Activated CD4-positive, alpha-beta T cell treated with anti-CD3 and anti-CD28 coated beads, Interleukin-2, amount 10 ng/mL, durations not matched to agents 24 days and 14 days (primary cell): ENCODE measurements at regions of chrX and their contacts with region 1.

Region 1: DNA sequence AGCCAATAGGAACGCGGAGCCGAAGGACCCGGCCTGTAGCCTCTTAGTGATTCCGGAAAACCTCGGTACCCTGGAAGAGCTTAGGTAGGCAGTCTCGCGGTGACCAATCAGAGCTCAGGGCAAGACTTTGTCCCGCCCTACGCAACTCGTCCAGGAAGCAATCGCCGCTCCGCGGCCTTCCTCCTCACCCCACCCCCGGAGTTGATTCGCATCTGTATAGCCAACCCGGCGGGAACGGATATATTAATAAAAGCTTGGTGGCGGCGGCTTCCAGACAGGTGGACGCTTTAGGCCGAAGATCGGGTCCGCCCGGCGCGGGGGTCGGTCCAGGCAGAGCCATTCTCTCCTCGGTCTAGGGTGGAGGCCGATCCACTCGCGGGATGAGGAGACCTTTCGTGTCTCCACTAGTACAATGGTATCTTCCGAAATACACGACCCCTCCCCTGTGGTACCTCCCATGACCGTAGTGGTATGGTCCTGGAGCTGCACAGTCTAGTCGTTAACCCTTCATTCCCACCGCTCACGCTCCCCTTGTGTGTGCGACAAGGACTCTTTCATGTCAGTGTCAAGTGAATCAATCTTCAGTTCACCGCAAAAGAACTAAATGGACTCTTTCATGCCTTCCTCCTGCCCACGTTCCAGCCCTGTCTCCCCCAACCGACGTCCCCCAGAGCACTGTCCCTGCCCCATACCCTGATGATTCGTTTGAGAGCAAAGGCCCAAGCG is 24.2 kb upstream of the GLOD5 start:
- DNase-seq: peak; percentile 96
- H3K4me3 Mint-ChIP-seq: peak overlapping the region; percentile 91
- H3K27ac Mint-ChIP-seq: peak overlapping the region; percentile 89
- H3K4me1 Mint-ChIP-seq: peaks cover 12% of the 10 kb centered on the region
- H3K27me3 Mint-ChIP-seq: no peaks in the 10 kb centered on the region

Region 2: DNA sequence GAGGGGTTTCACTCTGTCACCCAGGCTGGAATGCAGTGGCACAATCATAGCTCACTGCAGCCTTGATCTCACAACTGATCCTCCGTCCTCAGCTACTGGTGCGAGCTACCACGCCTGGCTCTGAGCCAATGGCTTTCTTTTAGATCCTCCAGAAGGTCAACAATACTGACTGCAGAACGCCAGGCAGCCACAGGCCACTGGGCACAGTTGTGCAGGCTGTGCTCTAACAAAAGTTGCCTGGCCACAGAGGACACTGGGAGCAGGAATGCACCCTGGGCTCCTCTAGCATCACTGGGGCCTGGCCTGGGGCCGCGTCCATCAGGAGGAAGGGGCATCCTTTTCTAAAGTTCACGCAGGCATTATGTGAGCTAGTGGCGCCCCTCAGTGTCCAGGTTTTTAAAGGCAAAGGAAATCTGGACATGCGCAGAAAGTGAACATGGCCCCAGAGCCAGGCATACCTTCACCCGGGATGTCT is 243.4 kb before region 1 on chrX:
- intact Hi-C with region 1: no loop called
- DNase-seq: no peak
- H3K4me3 Mint-ChIP-seq: no peak overlapping the region
- H3K27ac Mint-ChIP-seq: no peak overlapping the region
- H3K4me1 Mint-ChIP-seq: peaks cover 3% of the 10 kb centered on the region
- H3K27me3 Mint-ChIP-seq: no peaks in the 10 kb centered on the region

Region 3: GRCh38 chrX:48683411-48683982 is 53.9 kb before region 1 on chrX and contains the start of gene WAS:
- intact Hi-C with region 1: loop called (anchors 2 kb)
- DNase-seq: peak; percentile 85
- H3K4me3 Mint-ChIP-seq: peak within 1 kb of the TSS; percentile 98
- H3K27ac Mint-ChIP-seq: peak within 1 kb of the TSS; percentile 98
- H3K4me1 Mint-ChIP-seq: peaks cover 43% of the 10 kb centered on the region
- H3K27me3 Mint-ChIP-seq: no peaks in the 10 kb centered on the region
- total RNA-seq, gene WAS: 99.0 and 104 TPM in 2 replicates

Region 4: GRCh38 chrX:48696301-48697181 is 40.8 kb before region 1 on chrX and contains the start of gene SUV39H1:
- intact Hi-C with region 1: loop called (anchors 5 kb)
- DNase-seq: peak; percentile 96
- H3K4me3 Mint-ChIP-seq: peak within 1 kb of the TSS; percentile 93
- H3K27ac Mint-ChIP-seq: peak within 1 kb of the TSS; percentile 98
- H3K4me1 Mint-ChIP-seq: peaks cover 28% of the 10 kb centered on the region
- H3K27me3 Mint-ChIP-seq: no peaks in the 10 kb centered on the region
- total RNA-seq, gene SUV39H1: 27.6 and 32.2 TPM in 2 replicates

Region 5: GRCh38 chrX:48714573-48714972 is 22.8 kb before region 1 on chrX:
- intact Hi-C with region 1: loop called (anchors 1 kb)
- DNase-seq: peak; percentile 72
- H3K4me3 Mint-ChIP-seq: peak overlapping the region; percentile 85
- H3K27ac Mint-ChIP-seq: peak overlapping the region; percentile 95
- H3K4me1 Mint-ChIP-seq: peaks cover 73% of the 10 kb centered on the region
- H3K27me3 Mint-ChIP-seq: no peaks in the 10 kb centered on the region

Region 6: DNA sequence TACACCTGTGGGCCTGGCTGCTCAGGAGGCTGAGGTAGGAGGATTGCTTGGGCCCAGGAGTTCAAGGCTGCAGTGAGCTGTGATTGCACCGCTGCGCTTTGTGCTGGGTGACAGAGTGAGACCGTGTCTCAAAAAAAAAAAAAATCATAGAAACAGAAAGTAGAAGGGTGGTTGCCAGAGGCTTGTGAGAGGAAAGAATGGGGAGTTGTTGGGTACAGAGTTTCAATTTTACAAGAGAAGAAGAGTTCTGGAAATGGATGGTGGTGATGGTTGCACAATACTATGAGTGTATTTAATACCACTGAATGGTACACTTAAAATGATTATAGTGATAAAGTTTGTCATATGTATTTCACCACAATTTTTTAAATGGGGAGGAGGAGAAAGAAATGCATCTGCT is 14.0 kb after region 1 on chrX:
- intact Hi-C with region 1: loop called (anchors 1 kb)
- DNase-seq: peak; percentile 58
- H3K4me3 Mint-ChIP-seq: peak overlapping the region; percentile 40
- H3K27ac Mint-ChIP-seq: peak overlapping the region; percentile 60
- H3K4me1 Mint-ChIP-seq: peaks cover 6% of the 10 kb centered on the region
- H3K27me3 Mint-ChIP-seq: peaks cover 2% of the 10 kb centered on the region

Region 7: DNA sequence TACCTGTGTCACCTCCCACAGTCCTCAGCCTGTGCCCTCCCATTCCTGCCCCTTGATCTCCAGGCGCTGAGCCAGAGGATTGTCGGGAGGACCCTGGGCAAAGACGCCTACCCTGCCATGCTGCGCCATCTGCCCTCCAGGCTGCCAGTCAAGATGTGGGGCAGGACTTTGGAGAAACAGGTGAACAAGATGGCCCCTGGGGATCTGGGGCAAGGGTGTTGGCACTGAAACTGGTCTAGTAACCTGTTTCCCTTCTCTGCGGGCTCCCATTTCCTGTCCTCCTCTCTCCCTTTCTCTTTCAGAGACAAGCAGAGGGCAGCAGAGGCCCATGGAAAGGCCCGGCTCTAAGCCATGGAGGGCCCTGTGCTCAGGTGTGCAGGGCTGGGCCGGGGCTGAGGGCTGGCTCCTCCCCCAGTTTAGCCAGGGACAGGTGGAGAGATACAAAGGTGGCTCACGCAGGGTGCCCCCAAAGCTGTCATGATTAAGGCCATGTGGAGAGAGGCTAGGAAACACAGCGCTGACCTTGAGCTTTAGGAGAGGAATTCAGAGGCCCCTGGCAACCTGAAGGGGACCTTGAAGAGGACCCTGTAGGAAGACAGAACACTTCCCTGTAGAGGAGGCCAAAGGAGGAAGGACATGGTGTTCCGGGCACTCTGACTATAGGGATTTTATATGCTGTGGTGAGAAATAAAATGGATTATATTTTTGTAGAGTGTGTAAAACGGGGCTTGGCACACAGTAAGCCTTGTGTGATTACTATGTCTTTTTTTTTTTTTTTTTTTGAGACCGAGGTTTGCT is 24.5 kb after region 1 on chrX and contains the start of gene GLOD5:
- intact Hi-C with region 1: no loop called
- DNase-seq: peak; percentile 72
- H3K4me3 Mint-ChIP-seq: no peak within 1 kb of the TSS
- H3K27ac Mint-ChIP-seq: peak within 1 kb of the TSS; percentile 51
- H3K4me1 Mint-ChIP-seq: peaks cover 5% of the 10 kb centered on the region
- H3K27me3 Mint-ChIP-seq: no peaks in the 10 kb centered on the region
- total RNA-seq, gene GLOD5: not detected in 2 replicates

Region 8: GRCh38 chrX:48801280-48802088 is 64.1 kb after region 1 on chrX and contains the start of gene HDAC6:
- intact Hi-C with region 1: loop called (anchors 5 kb)
- DNase-seq: peak; percentile 98
- H3K4me3 Mint-ChIP-seq: peak within 1 kb of the TSS; percentile 96
- H3K27ac Mint-ChIP-seq: peak within 1 kb of the TSS; percentile 96
- H3K4me1 Mint-ChIP-seq: peaks cover 16% of the 10 kb centered on the region
- H3K27me3 Mint-ChIP-seq: no peaks in the 10 kb centered on the region
- total RNA-seq, gene HDAC6: 50.6 and 55.2 TPM in 2 replicates

Region 9: GRCh38 chrX:48957827-48958634 is 220.7 kb after region 1 on chrX:
- intact Hi-C with region 1: loop called (anchors 5 kb)
- DNase-seq: peak; percentile 97
- H3K4me3 Mint-ChIP-seq: peak overlapping the region; percentile 98
- H3K27ac Mint-ChIP-seq: peak overlapping the region; percentile 100
- H3K4me1 Mint-ChIP-seq: peaks cover 36% of the 10 kb centered on the region
- H3K27me3 Mint-ChIP-seq: no peaks in the 10 kb centered on the region